Activated T-helper 1 cell treated with anti-CD3 and anti-CD28 coated beads, Interleukin-12 subunit alpha, Interleukin-12 subunit beta, Interleukin-2, Interleukin-4 antibody, amounts not matched to agents 30 ng/mL and 10 ng/mL and 1 ng/mL, durations not matched to agents 14 hours and 24 hours and 36 hours (primary cell): ENCODE measurements at regions of chr9 and their contacts with region 1.

Region 1: DNA sequence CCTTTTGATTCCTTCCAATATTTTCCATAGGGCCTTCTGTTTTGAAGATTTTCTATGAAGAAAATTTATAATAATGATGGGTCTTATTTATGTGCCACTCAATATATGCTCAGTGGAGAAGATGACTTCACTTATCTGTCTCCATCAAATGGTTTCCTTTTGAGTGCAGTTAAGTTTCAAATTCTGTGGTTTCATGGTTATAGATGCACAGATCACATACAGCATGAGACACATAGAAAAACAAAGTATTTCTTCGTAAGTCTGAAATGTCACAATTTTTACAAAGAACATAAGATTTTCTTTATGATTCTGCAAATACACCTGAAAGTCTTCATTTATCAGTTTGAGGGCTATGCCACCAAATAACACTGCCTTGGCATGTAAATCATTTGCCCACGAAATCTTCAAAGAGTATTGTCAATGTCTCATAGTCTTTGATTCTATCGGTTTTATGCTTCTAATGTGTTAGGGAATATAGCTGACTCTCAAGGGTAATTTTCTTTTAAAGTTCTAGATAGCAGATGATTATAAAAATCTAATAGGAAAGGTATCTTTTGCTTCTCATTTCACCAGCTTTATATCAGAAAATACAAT is 14.1 kb downstream of the CFAP95 start:
- DNase-seq: no peak
- H3K4me3 Mint-ChIP-seq: no peak overlapping the region
- H3K27ac Mint-ChIP-seq: no peak overlapping the region
- H3K4me1 Mint-ChIP-seq: peaks cover 52% of the 10 kb centered on the region
- H3K27me3 Mint-ChIP-seq: no peaks in the 10 kb centered on the region

Region 2: DNA sequence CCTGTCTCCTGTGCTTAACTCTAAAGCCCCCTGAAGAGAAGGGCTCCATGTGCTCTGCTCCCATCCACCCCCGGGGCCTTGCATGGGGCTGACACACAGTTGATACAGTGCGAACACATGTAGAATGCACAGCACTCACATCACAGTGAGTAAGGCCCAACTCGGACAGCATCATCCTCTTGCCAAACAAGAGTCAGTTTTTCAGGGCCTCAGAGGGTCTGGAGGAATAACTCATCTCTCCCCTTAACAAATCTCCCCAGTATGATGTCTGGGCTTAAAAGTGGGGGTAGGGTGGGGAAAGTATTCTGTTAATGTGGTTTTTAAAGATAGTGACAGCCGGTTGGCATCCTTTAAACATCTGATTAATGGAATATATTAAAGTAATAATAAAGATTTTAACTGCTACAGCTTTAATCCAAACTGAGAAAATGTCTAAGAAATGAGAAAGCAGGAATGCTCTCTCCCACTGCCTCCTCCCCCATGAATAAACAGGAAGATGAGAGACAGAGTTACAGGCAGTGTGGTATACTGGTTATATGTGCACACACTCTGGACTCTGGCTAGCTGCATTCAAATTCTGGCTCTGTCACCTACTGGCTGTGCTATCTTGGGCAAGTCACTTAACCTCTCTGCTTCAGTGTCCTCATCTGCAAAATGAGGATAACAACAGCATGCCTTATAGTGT is 185.0 kb before region 1 on chr9:
- intact Hi-C with region 1: no loop called
- DNase-seq: no peak
- H3K4me3 Mint-ChIP-seq: no peak overlapping the region
- H3K27ac Mint-ChIP-seq: no peak overlapping the region
- H3K4me1 Mint-ChIP-seq: no peaks in the 10 kb centered on the region
- H3K27me3 Mint-ChIP-seq: peaks cover 3% of the 10 kb centered on the region

Region 3: DNA sequence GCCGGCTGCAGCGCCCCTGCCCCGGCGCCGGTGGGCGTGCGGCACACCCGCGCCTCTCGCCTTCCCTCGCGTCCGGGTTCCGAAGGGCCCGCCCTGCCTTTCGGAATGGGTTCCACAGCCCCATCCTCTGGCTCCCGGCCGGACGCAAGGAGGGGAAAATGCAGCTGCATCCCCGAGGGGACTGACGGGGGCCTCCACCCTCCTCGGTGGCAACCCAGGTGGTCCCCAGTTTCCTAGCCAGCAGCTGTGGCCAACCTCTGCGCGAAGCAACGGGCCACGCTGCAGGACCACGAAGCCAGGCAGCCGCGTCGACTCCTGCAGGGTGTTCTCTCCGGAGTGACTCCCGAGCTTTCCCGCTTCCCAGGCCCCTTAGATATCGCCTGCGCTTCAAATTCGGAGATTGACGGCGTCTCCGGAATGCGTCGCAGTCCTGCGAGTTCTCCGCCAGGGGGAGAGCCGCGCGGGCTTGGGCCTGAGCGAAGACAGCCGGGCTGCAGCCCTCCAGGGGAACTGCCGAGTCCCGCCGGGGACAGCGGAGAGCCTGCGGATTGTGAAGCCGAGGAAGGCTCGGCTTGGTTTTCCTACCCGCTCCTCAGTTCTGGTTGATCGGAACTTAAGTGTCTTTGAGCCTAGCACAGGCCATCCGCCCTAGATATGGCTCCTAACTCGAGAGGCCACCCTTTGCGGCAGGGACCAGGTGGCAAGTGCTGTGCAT is 161.9 kb before region 1 on chr9:
- intact Hi-C with region 1: loop called (anchors 5 kb)
- DNase-seq: peak; percentile 65
- H3K4me3 Mint-ChIP-seq: peak overlapping the region; percentile 83
- H3K27ac Mint-ChIP-seq: peak overlapping the region; percentile 15
- H3K4me1 Mint-ChIP-seq: peaks cover 7% of the 10 kb centered on the region
- H3K27me3 Mint-ChIP-seq: peaks cover 42% of the 10 kb centered on the region

Region 4: GRCh38 chr9:69822091-69822750 is 12.5 kb before region 1 on chr9:
- intact Hi-C with region 1: loop called (anchors 1 kb)
- DNase-seq: no peak
- H3K4me3 Mint-ChIP-seq: no peak overlapping the region
- H3K27ac Mint-ChIP-seq: peak overlapping the region; percentile 13
- H3K4me1 Mint-ChIP-seq: peaks cover 46% of the 10 kb centered on the region
- H3K27me3 Mint-ChIP-seq: peaks cover 10% of the 10 kb centered on the region

Region 5: GRCh38 chr9:69898714-69899209 is 64.1 kb after region 1 on chr9:
- intact Hi-C with region 1: loop called (anchors 2 kb)
- DNase-seq: no peak
- H3K4me3 Mint-ChIP-seq: no peak overlapping the region
- H3K27ac Mint-ChIP-seq: no peak overlapping the region
- H3K4me1 Mint-ChIP-seq: peaks cover 8% of the 10 kb centered on the region
- H3K27me3 Mint-ChIP-seq: peaks cover 2% of the 10 kb centered on the region

Region 6: GRCh38 chr9:70563431-70564204 is 728.9 kb after region 1 on chr9:
- intact Hi-C with region 1: loop called (anchors 2 kb)
- DNase-seq: peak; percentile 70
- H3K4me3 Mint-ChIP-seq: peak overlapping the region; percentile 69
- H3K27ac Mint-ChIP-seq: peak overlapping the region; percentile 89
- H3K4me1 Mint-ChIP-seq: peaks cover 72% of the 10 kb centered on the region
- H3K27me3 Mint-ChIP-seq: peaks cover 2% of the 10 kb centered on the region